ENCODE measurements at regions of chr3 and their contacts with region 1.

Region 1: DNA sequence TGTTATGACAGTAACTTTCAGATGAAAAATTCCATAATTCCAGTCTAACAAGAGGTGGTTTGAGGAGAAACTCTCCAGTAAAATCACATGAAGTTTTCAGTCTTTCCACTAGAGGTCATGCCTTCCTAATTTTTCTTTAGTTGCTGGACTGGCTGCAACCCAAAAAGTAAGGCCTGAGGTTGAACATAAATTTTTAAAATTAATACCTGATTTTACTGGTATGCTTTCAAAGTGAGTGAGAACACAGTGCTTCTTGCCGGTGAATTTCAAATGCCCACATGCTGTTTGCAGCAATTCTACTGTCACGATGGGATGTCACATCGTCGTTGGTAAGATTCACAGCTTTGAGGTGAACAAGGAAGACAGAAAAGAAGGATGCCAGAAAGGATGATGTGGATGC is 89.0 kb upstream of the FGF12 start:
- DNase-seq: peak; percentile 29 to 67
- H3K4me3 ChIP-seq: no peak overlapping the region
- H3K27ac ChIP-seq: no peak overlapping the region
- H3K4me1 ChIP-seq: peaks cover 19% of the 10 kb centered on the region
- H3K27me3 ChIP-seq: no peaks in the 10 kb centered on the region
- CTCF ChIP-seq: peak; percentile 96

Region 2: GRCh38 chr3:192879336-192880106 is 63.2 kb after region 1 on chr3:
- CTCF ChIA-PET with region 1: interaction called, 3 read pairs
- POLR2A ChIA-PET with region 1: interaction called, 4 read pairs
- intact Hi-C with region 1: loop called (anchors 1 kb)
- DNase-seq: peak; percentile 92 to 100
- H3K4me3 ChIP-seq: peak overlapping the region; percentile 37; the same call in 1 of the 2 replicates
- H3K27ac ChIP-seq: no peak overlapping the region
- H3K4me1 ChIP-seq: peaks cover 42% of the 10 kb centered on the region
- H3K27me3 ChIP-seq: no peaks in the 10 kb centered on the region
- CTCF ChIP-seq: no peak

Region 3: DNA sequence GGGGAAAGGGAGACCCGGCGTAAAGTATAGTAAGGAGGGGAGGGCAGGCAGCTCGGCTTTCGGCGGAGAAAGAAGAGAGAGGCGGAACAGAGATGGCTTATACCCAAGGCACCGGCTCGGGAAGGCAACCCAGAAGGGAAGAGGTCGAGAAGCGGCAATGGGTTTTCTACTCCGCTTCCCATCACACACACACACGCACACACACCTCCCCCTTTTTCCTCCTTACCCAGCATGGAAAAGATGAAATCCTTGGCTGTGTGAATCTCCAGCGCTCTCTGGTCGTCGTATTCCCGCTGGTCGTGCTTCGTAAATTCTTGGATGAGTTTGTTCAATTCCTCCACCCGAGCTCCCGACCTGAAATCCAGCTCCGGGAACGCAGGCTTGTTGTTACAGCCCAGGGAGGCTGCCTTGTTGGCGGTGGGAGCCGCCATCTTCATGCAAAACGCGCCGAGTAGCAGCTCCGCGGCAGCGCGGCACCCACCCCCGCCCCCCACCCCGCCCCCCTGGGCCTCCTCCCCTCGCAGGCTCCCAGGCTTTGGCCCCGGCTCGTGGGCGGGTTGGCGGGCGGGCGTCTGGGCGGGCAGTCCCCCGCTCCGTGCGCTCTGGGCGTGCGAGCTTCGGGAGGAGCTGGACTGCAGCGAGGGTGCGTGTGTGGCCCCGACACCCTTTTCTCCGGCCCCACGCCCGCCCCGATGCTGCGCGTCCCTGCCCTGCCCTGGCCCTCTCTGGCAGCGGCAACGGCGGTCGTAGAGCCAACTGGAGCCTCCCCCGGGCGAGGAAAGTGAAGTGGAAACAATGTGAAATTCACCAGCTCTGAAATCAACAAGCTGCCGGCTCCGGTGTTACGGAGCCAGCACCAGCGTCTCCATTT is 101.3 kb after region 1 on chr3 and contains the start of gene MB21D2:
- CTCF ChIA-PET with region 1: interaction called, 3 read pairs
- POLR2A ChIA-PET with region 1: no interaction called
- intact Hi-C with region 1: loop called (anchors 1 kb)
- DNase-seq: peak; percentile 78 to 86
- H3K4me3 ChIP-seq: peak within 1 kb of the TSS; percentile 79
- H3K27ac ChIP-seq: peak within 1 kb of the TSS; percentile 79
- H3K4me1 ChIP-seq: peaks cover 29% of the 10 kb centered on the region
- H3K27me3 ChIP-seq: no peaks in the 10 kb centered on the region
- CTCF ChIP-seq: no peak
- total RNA-seq, gene MB21D2: 4.5 and 5.1 TPM in 2 replicates

Region 4: GRCh38 chr3:193129601-193130000 is 313.2 kb after region 1 on chr3:
- CTCF ChIA-PET with region 1: interaction called, 5 read pairs
- POLR2A ChIA-PET with region 1: no interaction called
- intact Hi-C with region 1: loop called (anchors 1 kb)
- DNase-seq: peak in 1 of 2 experiments; percentile 24
- H3K4me3 ChIP-seq: no peak overlapping the region
- H3K27ac ChIP-seq: no peak overlapping the region
- H3K4me1 ChIP-seq: no peaks in the 10 kb centered on the region
- H3K27me3 ChIP-seq: peaks cover 24% of the 10 kb centered on the region; the same call in 1 of the 2 replicates
- CTCF ChIP-seq: peak; percentile 69

Region 5: DNA sequence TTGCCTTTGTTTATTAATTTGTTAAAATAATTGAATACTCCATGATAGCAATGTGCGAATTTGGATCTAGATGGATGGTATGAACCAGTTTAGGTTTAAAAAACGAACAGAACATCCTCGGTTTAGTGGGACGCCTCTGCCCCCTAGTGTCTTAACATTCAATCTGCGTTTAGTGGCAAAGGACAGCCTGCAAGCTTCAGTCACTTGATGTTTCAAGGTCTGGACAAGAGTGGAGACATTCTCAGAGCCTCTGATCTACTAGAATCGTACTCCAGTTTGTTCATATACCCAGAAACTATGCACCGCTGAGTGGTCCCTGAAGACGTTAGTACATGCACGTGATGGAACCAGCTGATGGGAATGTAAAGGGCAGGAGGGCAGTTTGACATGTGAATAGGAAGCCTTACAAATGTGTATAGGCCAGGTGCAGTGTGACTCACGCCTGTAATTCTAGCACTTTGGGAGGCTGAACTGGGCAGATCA is 756.1 kb after region 1 on chr3:
- CTCF ChIA-PET with region 1: interaction called, 9 read pairs
- POLR2A ChIA-PET with region 1: no interaction called
- intact Hi-C with region 1: loop called (anchors 1 kb)
- DNase-seq: peak; percentile 69
- H3K4me3 ChIP-seq: no peak overlapping the region
- H3K27ac ChIP-seq: no peak overlapping the region
- H3K4me1 ChIP-seq: peaks cover 14% of the 10 kb centered on the region
- H3K27me3 ChIP-seq: no peaks in the 10 kb centered on the region
- CTCF ChIP-seq: peak; percentile 98

Measured in PC-9 (cell line).